ENCODE measurements at regions of chr7 and their contacts with region 1.

Region 1: GRCh38 chr7:30276203-30276900 is 8.0 kb upstream of the ZNRF2 start:
- DNase-seq: peak in 7 of 10 donors; percentile 56 to 90 (median 59)

Region 2: GRCh38 chr7:30412810-30413504 is 136.6 kb after region 1 on chr7:
- intact Hi-C with region 1: loop called (anchors 1 kb)
- DNase-seq: peak in 1 of 10 donors; percentile 28

Measured in posterior cingulate gyrus (tissue), 11 donors.